Endothelial cell of umbilical vein (primary cell): ENCODE measurements at regions of chr3 and their contacts with region 1.

Region 1: DNA sequence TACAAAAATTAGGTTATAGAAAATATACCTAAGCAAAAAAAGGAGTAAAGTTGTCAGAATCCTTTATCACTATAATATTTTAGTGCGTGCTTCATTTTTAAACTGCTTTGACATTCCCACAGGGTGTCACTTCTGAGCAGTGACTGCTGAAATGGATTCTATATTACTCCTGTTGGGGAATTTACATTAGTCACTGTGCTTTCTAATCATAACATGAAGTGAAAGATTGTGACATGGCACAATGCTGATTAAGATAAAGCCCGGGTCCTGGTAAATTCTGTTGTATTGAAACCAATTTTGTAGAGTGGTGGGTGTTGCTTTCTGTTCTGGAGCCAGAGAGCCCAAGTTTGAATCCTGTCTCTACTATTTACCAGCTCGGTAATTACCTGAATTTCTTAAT is 36.4 kb upstream of the EHHADH start:
- DNase-seq: no peak
- H3K4me3 ChIP-seq: no peak overlapping the region
- H3K27ac ChIP-seq: no peak overlapping the region
- H3K4me1 ChIP-seq: no peaks in the 10 kb centered on the region
- H3K27me3 ChIP-seq: no peaks in the 10 kb centered on the region
- CTCF ChIP-seq: no peak
- POLR2A ChIP-seq: no peak

Region 2: GRCh38 chr3:185042312-185043050 is 247.8 kb before region 1 on chr3:
- CTCF ChIA-PET with region 1: no interaction called
- POLR2A ChIA-PET with region 1: no interaction called
- dilution Hi-C with region 1: no loop called
- intact Hi-C with region 1: no loop called
- DNase-seq: no peak
- H3K4me3 ChIP-seq: no peak overlapping the region
- H3K27ac ChIP-seq: no peak overlapping the region
- H3K4me1 ChIP-seq: peaks cover 28% of the 10 kb centered on the region
- H3K27me3 ChIP-seq: no peaks in the 10 kb centered on the region
- CTCF ChIP-seq: no peak
- POLR2A ChIP-seq: no peak

Region 3: GRCh38 chr3:185308126-185308754 is 18.0 kb after region 1 on chr3:
- CTCF ChIA-PET with region 1: interaction called, 10 read pairs
- POLR2A ChIA-PET with region 1: no interaction called
- dilution Hi-C with region 1: no loop called
- intact Hi-C with region 1: no loop called
- DNase-seq: peak; percentile 68
- H3K4me3 ChIP-seq: no peak overlapping the region
- H3K27ac ChIP-seq: no peak overlapping the region
- H3K4me1 ChIP-seq: no peaks in the 10 kb centered on the region
- H3K27me3 ChIP-seq: no peaks in the 10 kb centered on the region
- CTCF ChIP-seq: peak; percentile 64 to 77
- POLR2A ChIP-seq: no peak